H1 (cell line): ENCODE measurements at regions of chr16 and their contacts with region 1.

Region 1: DNA sequence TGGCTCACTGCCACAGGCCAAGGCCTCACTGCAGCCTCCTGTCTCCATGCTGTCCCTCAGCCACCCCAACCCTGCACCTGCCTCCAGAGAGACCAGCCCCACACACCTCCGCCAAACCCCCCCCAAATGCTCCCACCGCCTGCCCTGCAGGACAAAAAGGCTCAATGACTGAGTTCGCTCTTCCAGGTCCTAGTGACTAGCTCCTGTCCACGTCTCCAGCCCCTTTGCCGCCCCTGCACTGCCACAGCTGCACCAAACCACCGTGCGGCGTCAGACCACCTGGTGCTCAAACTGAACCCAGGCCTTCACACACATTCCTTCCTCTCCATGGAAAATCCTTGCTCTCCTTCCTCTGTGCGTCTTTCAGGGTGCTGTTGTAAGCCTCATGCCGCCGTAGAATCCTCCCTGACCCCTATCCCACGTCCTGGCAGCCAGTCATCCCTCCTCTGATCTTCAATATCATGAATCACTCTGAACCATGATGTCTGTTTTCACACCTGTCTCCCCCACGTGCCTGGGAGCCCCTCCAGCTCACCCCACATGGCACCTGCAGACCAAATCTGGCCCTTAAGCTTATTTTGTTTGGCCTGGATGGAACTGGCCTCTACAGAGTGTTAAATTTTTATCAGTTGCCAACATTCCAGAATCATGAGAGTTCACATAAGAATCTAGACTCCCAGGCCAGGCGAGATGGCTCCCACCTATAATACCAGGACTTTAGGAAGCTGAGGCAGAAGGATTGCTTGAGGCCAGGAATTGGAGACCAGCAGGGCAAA is 4.3 kb upstream of the GSG1L start:
- DNase-seq: no peak
- H3K4me3 ChIP-seq: no peak overlapping the region
- H3K27ac ChIP-seq: no peak overlapping the region
- H3K4me1 ChIP-seq: no peaks in the 10 kb centered on the region; a peak in 2 of 7 replicates
- H3K27me3 ChIP-seq: peaks cover 15 to 22% (median 20%) of the 10 kb centered on the region in 4 experiments
- CTCF ChIP-seq: no peak
- EP300 ChIP-seq: no peak
- POLR2A ChIP-seq: no peak
- RAD21 ChIP-seq: no peak

Region 2: GRCh38 chr16:27935076-27935475 is 132.7 kb before region 1 on chr16:
- CTCF ChIA-PET with region 1: interaction called, 10 read pairs
- POLR2A ChIA-PET with region 1: no interaction called
- DNase-seq: no peak
- H3K4me3 ChIP-seq: no peak overlapping the region
- H3K27ac ChIP-seq: no peak overlapping the region
- H3K4me1 ChIP-seq: no peaks in the 10 kb centered on the region
- H3K27me3 ChIP-seq: no peaks in the 10 kb centered on the region
- CTCF ChIP-seq: no peak
- EP300 ChIP-seq: no peak
- POLR2A ChIP-seq: no peak
- RAD21 ChIP-seq: no peak

Region 3: DNA sequence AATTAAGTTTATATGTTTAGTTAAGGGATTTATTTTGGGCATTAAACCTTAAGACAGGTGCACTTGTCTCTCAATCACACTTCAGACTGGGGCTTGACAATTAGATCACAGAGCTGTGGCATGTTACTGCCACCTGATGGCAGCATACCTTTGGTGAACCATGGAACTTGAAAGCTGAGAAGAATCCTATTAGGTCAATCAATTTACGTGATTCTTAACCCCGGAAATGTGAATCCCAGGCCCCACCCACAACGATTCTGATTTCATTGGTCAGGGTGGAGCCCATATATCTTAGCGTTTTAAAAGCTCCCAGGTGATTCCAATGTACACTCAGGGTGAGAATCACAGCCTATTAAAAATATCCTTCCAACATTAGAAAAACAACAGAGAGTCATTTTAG is 95.3 kb before region 1 on chr16:
- CTCF ChIA-PET with region 1: interaction called, 77 read pairs
- POLR2A ChIA-PET with region 1: no interaction called
- DNase-seq: peak in 1 of 2 experiments; percentile 53
- H3K4me3 ChIP-seq: no peak overlapping the region
- H3K27ac ChIP-seq: no peak overlapping the region
- H3K4me1 ChIP-seq: no peaks in the 10 kb centered on the region
- H3K27me3 ChIP-seq: no peaks in the 10 kb centered on the region; a peak in 1 of 7 replicates
- CTCF ChIP-seq: peak; percentile 10 to 81 (median 80)
- EP300 ChIP-seq: no peak
- POLR2A ChIP-seq: no peak
- RAD21 ChIP-seq: peak; percentile 85 to 89

Region 4: DNA sequence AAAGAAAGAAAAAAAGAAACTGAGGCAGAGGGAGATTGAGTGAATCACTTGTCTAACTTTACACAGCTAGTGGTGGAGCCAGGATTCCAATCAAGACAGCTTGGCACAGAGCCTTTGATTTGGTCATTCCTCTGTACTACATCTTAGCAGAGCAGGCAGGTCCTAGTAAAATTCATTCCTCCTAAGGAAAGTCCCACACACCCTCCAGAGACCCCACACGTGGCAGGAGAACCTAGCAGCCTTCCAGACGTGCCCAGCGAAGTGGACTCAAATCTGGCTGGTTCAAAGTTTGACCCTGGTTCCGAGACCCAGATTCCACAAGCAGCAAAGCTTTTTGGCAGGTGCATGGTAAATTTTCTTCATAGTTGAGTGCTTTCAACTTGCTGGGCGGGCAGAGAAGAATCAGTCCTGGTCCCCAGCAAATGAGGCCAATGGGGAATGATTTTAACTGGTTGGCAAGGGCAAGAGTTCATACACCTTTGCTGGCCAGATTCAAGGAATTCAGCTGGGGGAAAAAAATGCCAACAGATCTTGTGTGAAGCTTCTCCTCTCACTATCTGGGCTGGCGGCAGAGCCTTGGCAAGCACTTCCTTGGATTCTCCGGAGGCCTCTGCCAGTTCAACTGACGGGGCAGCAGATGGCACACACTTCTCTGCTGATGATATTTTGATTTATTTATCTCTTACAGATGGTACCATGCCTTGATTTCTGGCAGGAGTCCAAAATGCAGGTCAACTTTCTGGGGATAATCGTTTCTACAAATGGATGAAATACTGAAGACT is 86.7 kb before region 1 on chr16:
- CTCF ChIA-PET with region 1: interaction called, 16 read pairs
- POLR2A ChIA-PET with region 1: no interaction called
- DNase-seq: no peak
- H3K4me3 ChIP-seq: no peak overlapping the region
- H3K27ac ChIP-seq: no peak overlapping the region
- H3K4me1 ChIP-seq: no peaks in the 10 kb centered on the region
- H3K27me3 ChIP-seq: no peaks in the 10 kb centered on the region; a peak in 1 of 7 replicates
- CTCF ChIP-seq: no peak
- EP300 ChIP-seq: no peak
- POLR2A ChIP-seq: no peak
- RAD21 ChIP-seq: no peak

Region 5: GRCh38 chr16:28053461-28053860 is 14.3 kb before region 1 on chr16:
- CTCF ChIA-PET with region 1: interaction called, 13 read pairs
- POLR2A ChIA-PET with region 1: no interaction called
- DNase-seq: no peak
- H3K4me3 ChIP-seq: no peak overlapping the region
- H3K27ac ChIP-seq: no peak overlapping the region
- H3K4me1 ChIP-seq: peaks cover 0 to 4% (median 0%) of the 10 kb centered on the region in 4 experiments; a peak in 1 of 7 replicates
- H3K27me3 ChIP-seq: no peaks in the 10 kb centered on the region; a peak in 3 of 7 replicates
- CTCF ChIP-seq: no peak
- EP300 ChIP-seq: no peak
- POLR2A ChIP-seq: no peak
- RAD21 ChIP-seq: no peak

Region 6: DNA sequence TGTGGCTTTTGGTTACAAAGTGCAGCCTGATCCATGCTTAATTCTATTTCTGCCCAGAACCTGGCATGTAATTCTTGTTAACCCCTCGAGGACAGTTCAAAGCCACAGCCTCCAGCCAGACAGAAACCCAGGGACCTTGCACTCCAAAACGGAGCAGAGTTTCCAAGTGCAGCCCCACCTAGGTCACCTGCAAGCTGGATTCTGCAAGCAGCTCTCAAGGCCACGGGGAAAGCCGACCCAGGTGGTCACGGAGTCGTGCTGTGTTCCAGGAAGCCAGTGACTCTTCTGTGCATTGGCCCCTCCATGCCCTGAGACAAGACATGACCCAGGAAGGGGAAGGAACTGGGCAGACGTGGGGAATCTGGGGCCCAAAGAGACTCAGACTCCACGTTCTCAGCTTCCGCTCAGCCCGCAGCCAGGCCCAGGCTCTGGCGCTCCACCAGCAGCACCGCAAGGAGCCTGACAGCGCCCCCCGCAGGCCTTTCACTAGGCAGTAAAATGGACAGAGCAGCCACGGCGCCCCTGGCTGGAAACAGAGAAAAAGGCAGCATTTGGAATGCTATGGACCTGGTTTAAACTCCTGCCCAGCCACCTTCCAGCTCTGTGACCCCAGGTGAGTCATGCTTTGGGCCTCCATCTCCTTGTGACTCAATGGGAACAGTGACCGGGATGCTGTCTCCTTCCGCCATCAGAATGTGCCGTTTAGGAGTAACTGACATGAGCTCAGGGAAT is 23.0 kb after region 1 on chr16:
- CTCF ChIA-PET with region 1: interaction called, 19 read pairs
- POLR2A ChIA-PET with region 1: no interaction called
- DNase-seq: peak; percentile 66 to 88
- H3K4me3 ChIP-seq: no peak overlapping the region
- H3K27ac ChIP-seq: no peak overlapping the region
- H3K4me1 ChIP-seq: peaks cover 0 to 26% (median 13%) of the 10 kb centered on the region in 4 experiments; a peak in 6 of 7 replicates
- H3K27me3 ChIP-seq: no peaks in the 10 kb centered on the region
- CTCF ChIP-seq: peak; percentile 82 to 99 (median 95)
- EP300 ChIP-seq: no peak
- POLR2A ChIP-seq: no peak
- RAD21 ChIP-seq: peak; percentile 60 to 71